Activated B cell treated with CpG ODN at 0.5 μM for 24 hours (primary cell): ENCODE measurements at regions of chr7 and their contacts with region 1.

Region 1: GRCh38 chr7:134126966-134127848 is at the start of gene LRGUK:
- DNase-seq: peak; percentile 65
- ATAC-seq: peak; percentile 100
- H3K4me3 Mint-ChIP-seq: peak within 1 kb of the TSS; percentile 88
- H3K27ac Mint-ChIP-seq: no peak within 1 kb of the TSS
- H3K4me1 Mint-ChIP-seq: peaks cover 12% of the 10 kb centered on the region
- H3K27me3 Mint-ChIP-seq: peaks cover 4% of the 10 kb centered on the region
- CTCF ChIP-seq: no peak
- total RNA-seq, gene LRGUK: 0.91 and 1.0 TPM in 2 replicates

Region 2: DNA sequence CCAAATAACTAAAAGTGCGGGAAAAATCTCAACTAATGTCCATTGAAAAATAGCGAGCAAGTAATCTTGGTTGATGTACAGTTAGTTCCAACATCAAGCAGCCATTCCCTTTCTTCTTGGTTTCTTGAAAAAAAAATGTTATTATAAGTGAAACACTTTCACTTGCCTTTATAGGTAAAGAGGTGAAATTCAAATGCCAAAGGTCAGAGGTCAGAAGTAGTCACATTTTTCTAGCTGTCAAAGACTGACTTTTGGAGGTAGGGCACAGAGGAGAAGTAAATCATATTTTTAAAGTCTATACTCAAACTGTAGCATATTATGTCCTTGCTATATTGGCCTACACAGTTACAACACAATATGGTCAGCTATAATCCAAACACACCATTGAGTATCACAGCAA is 1107.6 kb before region 1 on chr7:
- CTCF ChIA-PET with region 1: no interaction called
- POLR2A ChIA-PET with region 1: interaction called, 11 read pairs
- intact Hi-C with region 1: no loop called
- DNase-seq: no peak
- ATAC-seq: no peak
- H3K4me3 Mint-ChIP-seq: no peak overlapping the region
- H3K27ac Mint-ChIP-seq: no peak overlapping the region
- H3K4me1 Mint-ChIP-seq: peaks cover 3% of the 10 kb centered on the region
- H3K27me3 Mint-ChIP-seq: no peaks in the 10 kb centered on the region
- CTCF ChIP-seq: no peak

Region 3: GRCh38 chr7:133252858-133253518 is 874.2 kb before region 1 on chr7 and contains the start of gene EXOC4:
- CTCF ChIA-PET with region 1: no interaction called
- POLR2A ChIA-PET with region 1: no interaction called
- intact Hi-C with region 1: loop called (anchors 1 kb)
- DNase-seq: peak; percentile 67
- ATAC-seq: peak; percentile 100
- H3K4me3 Mint-ChIP-seq: peak within 1 kb of the TSS; percentile 95
- H3K27ac Mint-ChIP-seq: peak within 1 kb of the TSS; percentile 88
- H3K4me1 Mint-ChIP-seq: peaks cover 27% of the 10 kb centered on the region
- H3K27me3 Mint-ChIP-seq: no peaks in the 10 kb centered on the region
- CTCF ChIP-seq: no peak
- total RNA-seq, gene EXOC4: 89.1 and 103 TPM in 2 replicates

Region 4: DNA sequence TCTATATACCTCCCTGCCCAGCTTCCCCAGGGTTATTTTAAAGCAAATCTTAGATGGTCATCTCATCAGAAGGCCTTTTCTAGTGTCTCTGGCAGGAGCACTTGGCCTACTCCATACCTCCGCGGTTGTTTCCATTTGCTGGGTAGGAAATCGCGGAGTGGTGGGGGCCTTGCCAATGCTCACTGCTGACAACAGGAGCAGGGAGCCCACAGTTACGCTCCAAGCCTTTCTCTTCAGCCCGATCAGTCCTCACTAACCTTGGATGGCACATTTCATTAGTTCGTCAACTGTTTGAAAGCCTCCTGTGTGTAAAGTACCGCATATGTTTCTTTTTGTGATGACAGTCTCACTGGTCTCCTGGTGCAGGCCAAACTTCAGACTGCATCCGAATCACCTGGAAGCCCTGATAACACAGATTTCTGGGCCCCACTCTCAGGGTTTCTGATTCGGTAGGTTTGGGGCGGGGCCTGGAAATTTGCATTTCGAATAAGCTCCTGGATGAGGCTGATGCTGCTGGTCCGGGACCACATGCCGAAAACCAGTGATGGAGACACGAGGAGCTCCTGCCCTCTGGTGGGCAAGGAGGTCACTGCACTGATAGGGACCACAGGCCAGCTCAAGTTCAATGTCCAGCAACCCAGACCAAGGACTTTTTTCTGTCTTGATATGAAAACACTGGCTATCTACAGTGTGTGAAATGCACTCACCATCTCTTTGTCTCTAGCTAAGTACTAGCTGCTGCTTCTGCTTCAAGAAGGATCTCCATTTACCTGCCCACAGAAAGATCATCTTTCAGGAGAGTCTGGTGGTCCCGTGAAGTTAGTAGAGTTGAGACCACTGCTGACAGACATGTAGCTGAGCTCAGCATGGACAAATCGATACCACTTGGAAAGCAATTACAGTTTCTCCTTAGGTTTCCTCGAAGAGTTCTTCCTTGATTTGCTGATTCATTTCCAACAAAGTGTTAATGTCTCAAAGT is 14.0 kb after region 1 on chr7:
- CTCF ChIA-PET with region 1: interaction called, 8 read pairs
- POLR2A ChIA-PET with region 1: no interaction called
- intact Hi-C with region 1: loop called (anchors 1 kb)
- DNase-seq: peak; percentile 32
- ATAC-seq: peak; percentile 89
- H3K4me3 Mint-ChIP-seq: no peak overlapping the region
- H3K27ac Mint-ChIP-seq: no peak overlapping the region
- H3K4me1 Mint-ChIP-seq: peaks cover 4% of the 10 kb centered on the region
- H3K27me3 Mint-ChIP-seq: no peaks in the 10 kb centered on the region
- CTCF ChIP-seq: no peak

Region 5: GRCh38 chr7:135662373-135663114 is 1535.3 kb after region 1 on chr7 and contains the start of gene STMP1:
- CTCF ChIA-PET with region 1: no interaction called
- POLR2A ChIA-PET with region 1: no interaction called
- intact Hi-C with region 1: loop called (anchors 2 kb)
- DNase-seq: peak; percentile 96
- ATAC-seq: peak; percentile 98
- H3K4me3 Mint-ChIP-seq: peak within 1 kb of the TSS; percentile 91
- H3K27ac Mint-ChIP-seq: peak within 1 kb of the TSS; percentile 79
- H3K4me1 Mint-ChIP-seq: peaks cover 39% of the 10 kb centered on the region
- H3K27me3 Mint-ChIP-seq: no peaks in the 10 kb centered on the region
- CTCF ChIP-seq: no peak
- total RNA-seq, gene STMP1: 24.2 and 26.2 TPM in 2 replicates